ENCODE measurements at regions of chr2 and their contacts with region 1.

Region 1: GRCh38 chr2:220315098-220315823 is 687.8 kb downstream of the SLC4A3 start:
- DNase-seq: no peak
- ATAC-seq: no peak
- H3K4me3 ChIP-seq: no peak overlapping the region
- H3K27ac ChIP-seq: no peak overlapping the region
- H3K4me1 ChIP-seq: peaks cover 28% of the 10 kb centered on the region
- H3K27me3 ChIP-seq: no peaks in the 10 kb centered on the region
- CTCF ChIP-seq: no peak

Region 2: GRCh38 chr2:220147161-220148038 is 167.9 kb before region 1 on chr2:
- CTCF ChIA-PET with region 1: no interaction called
- POLR2A ChIA-PET with region 1: no interaction called
- intact Hi-C with region 1: no loop called
- DNase-seq: no peak
- ATAC-seq: no peak
- H3K4me3 ChIP-seq: no peak overlapping the region
- H3K27ac ChIP-seq: no peak overlapping the region
- H3K4me1 ChIP-seq: peaks cover 14% of the 10 kb centered on the region
- H3K27me3 ChIP-seq: no peaks in the 10 kb centered on the region
- CTCF ChIP-seq: no peak

Region 3: DNA sequence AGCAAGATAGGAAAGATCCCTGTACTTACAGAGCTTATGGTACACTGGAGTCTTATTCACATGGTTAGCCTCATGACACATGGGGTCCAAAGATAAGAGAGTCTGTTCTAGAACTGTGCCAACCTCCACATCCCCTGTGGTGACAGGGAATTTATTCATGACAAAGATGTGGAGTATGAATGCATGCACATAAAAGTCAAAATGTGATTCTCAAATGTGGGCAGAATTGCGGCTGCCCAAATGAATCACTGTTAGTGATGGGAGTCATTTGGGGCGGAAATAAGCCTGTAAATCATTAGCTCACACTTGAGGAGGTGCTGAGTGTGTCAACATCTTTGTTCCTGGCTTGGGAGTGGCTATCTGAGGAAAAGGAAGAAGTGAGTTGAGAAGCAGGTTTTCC is 127.2 kb before region 1 on chr2:
- CTCF ChIA-PET with region 1: no interaction called
- POLR2A ChIA-PET with region 1: no interaction called
- intact Hi-C with region 1: loop called (anchors 1 kb)
- DNase-seq: peak; percentile 98
- ATAC-seq: peak; percentile 78
- H3K4me3 ChIP-seq: no peak overlapping the region
- H3K27ac ChIP-seq: peak overlapping the region; percentile 87
- H3K4me1 ChIP-seq: peaks cover 25% of the 10 kb centered on the region
- H3K27me3 ChIP-seq: no peaks in the 10 kb centered on the region
- CTCF ChIP-seq: no peak

Measured in PC-3 (cell line).